Activated CD8-positive, alpha-beta T cell treated with anti-CD3 and anti-CD28 coated beads for 36 hours (primary cell): ENCODE measurements at regions of chr12 and their contacts with region 1.

Region 1: DNA sequence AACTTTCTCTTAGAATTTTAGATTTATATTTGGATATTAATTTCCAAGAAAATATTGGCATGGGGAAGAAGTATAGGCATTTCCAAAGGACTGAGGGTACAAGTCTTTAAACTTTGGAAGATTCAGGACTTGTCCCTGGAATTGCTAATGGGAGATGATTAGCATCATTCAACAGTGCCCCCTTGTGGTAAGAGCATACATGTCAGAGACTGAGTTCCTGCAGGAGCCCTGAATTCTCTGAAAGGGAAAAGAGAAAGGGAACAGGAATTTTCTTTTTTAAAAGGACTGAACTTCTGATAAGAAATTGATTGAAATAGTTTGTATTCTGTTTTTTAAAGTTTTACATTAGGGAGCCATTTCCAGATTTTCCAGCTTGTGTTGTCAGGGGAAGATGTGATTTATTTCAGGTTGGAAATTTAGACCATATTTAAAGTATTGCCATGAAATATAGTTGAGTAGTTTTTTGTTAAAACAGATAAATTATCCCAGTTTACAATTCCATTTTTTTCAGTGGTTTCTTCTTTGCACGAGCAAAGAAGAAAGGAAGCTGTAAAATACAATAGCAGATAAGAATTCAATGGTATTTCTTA is 44.0 kb upstream of the REP15 start:
- DNase-seq: peak; percentile 34
- ATAC-seq: no peak
- H3K4me3 Mint-ChIP-seq: no peak overlapping the region
- H3K27ac Mint-ChIP-seq: no peak overlapping the region
- H3K4me1 Mint-ChIP-seq: peaks cover 2% of the 10 kb centered on the region
- H3K27me3 Mint-ChIP-seq: peaks cover 1% of the 10 kb centered on the region
- CTCF ChIP-seq: peak; percentile 96

Region 2: DNA sequence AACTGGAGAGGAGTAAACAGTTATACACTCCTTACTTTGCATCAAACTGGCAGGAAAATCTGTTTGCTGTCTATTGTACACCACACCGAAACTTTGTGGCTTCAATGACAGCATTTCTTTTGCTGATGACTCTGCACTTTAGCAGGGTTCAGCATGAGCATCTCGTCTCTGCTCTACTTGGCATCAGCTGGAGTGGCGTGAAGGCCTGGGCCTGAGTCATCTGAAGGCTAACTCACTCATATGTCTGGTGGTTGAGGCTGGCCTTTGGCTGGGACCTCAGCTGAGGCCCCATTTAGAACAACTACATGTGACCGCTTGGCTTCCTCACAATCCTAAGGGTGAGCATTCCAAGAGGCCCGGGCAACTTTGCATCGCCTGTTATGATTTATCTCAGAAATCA is 15.3 kb after region 1 on chr12:
- CTCF ChIA-PET with region 1: interaction called, 27 read pairs
- POLR2A ChIA-PET with region 1: no interaction called
- intact Hi-C with region 1: no loop called
- DNase-seq: peak; percentile 7
- ATAC-seq: no peak
- H3K4me3 Mint-ChIP-seq: no peak overlapping the region
- H3K27ac Mint-ChIP-seq: no peak overlapping the region
- H3K4me1 Mint-ChIP-seq: no peaks in the 10 kb centered on the region
- H3K27me3 Mint-ChIP-seq: peaks cover 1% of the 10 kb centered on the region
- CTCF ChIP-seq: no peak